Posterior vena cava (tissue), 2 donors: ENCODE measurements at regions of chr7 and their contacts with region 1.

Region 1: DNA sequence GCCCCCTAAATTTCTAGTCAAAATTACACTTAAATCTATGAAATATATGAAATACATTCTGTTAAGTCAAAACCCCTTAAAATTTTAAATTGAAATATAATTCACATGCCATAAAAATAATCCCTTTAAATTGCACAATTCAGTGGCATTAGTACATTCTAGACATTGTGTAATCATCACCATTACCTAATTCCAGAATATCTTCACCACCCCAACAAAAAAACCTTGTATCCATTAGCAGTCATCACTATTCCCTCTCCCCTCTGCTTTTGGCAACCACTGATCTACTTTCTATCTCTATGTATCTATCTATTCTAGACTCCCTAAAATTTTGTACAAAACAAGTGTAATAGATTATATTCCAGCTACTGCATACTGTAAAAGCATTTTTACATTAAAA is 261.2 kb downstream of the GLI3 start:
- DNase-seq: no peak

Region 2: GRCh38 chr7:41955893-41956675 is 19.8 kb before region 1 on chr7:
- intact Hi-C with region 1: loop called in 1 of 2 experiments (anchors 1 kb)
- DNase-seq: peak; percentile 98